Activated CD4-positive, alpha-beta memory T cell treated with anti-CD3 and anti-CD28 coated beads for 36 hours (primary cell): ENCODE measurements at regions of chr1 and their contacts with region 1.

Region 1: GRCh38 chr1:119711804-119712341 is at the start of gene PHGDH:
- DNase-seq: peak; percentile 78
- H3K4me3 Mint-ChIP-seq: peak within 1 kb of the TSS; percentile 86
- H3K27ac Mint-ChIP-seq: peak within 1 kb of the TSS; percentile 72
- H3K4me1 Mint-ChIP-seq: peaks cover 17% of the 10 kb centered on the region
- H3K27me3 Mint-ChIP-seq: peaks cover 22% of the 10 kb centered on the region
- total RNA-seq, gene PHGDH: 138 to 143 TPM

Region 2: DNA sequence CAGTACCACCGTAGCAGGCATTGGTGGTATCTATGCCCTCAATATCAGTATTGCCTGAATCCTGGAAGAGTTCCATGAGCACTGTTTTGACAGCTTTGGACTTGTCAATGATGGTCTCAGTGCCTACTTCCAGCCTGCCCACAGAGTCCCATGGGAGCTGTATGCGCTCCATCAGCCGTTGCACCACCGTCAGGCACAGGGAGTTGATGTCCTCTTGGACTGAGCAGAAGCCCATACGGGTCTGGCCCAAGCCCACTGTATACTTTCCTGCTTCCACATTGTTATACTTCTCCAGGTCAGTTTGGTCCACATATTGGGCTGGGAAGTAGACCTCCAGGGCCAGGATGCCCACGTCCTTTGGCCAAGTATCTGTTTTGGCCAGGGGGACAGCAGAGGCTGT is 52.3 kb after region 1 on chr1:
- CTCF ChIA-PET with region 1: no interaction called
- POLR2A ChIA-PET with region 1: no interaction called
- intact Hi-C with region 1: loop called (anchors 5 kb)
- DNase-seq: no peak
- H3K4me3 Mint-ChIP-seq: no peak overlapping the region
- H3K27ac Mint-ChIP-seq: no peak overlapping the region
- H3K4me1 Mint-ChIP-seq: no peaks in the 10 kb centered on the region
- H3K27me3 Mint-ChIP-seq: peaks cover 13% of the 10 kb centered on the region